BJ (cell line): ENCODE measurements at regions of chr5 and their contacts with region 1.

Region 1: DNA sequence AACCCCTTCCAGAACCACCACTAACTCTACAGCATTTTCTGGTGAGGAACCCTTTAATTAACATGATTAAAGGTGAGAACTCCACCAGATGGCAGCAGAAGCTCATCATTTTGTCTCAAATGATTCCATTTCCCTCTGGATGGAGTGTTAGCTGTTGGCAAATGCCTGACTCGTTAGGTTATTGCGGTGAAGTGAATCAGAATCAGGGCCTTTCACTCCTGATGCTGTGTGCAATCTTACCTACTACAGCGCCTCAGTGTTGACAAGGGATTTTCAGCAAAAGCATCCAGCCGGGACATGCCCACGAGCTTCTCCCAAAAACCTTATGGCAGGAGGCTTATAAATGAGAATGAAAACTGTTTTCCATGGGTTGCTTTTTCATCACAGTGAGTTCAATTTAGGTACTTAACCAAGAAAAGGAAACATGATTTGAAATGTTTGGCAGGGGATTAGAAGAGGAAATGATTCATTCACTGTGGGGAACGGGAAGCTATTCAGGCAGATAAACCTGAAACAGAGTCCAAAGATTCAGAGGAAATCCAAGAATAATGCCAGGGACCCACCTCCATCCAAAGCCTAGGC is 48.0 kb upstream of the CAST start:
- DNase-seq: peak; percentile 59
- H3K4me3 ChIP-seq: no peak overlapping the region
- H3K27me3 ChIP-seq: no peaks in the 10 kb centered on the region
- CTCF ChIP-seq: peak; percentile 43; the same call in 1 of the 2 replicates

Region 2: GRCh38 chr5:96601811-96602244 is 12.4 kb before region 1 on chr5:
- CTCF ChIA-PET with region 1: interaction called, 15 read pairs
- POLR2A ChIA-PET with region 1: no interaction called
- DNase-seq: no peak
- H3K4me3 ChIP-seq: no peak overlapping the region
- H3K27me3 ChIP-seq: no peaks in the 10 kb centered on the region; the same call in 1 of the 2 replicates
- CTCF ChIP-seq: peak; percentile 76

Region 3: DNA sequence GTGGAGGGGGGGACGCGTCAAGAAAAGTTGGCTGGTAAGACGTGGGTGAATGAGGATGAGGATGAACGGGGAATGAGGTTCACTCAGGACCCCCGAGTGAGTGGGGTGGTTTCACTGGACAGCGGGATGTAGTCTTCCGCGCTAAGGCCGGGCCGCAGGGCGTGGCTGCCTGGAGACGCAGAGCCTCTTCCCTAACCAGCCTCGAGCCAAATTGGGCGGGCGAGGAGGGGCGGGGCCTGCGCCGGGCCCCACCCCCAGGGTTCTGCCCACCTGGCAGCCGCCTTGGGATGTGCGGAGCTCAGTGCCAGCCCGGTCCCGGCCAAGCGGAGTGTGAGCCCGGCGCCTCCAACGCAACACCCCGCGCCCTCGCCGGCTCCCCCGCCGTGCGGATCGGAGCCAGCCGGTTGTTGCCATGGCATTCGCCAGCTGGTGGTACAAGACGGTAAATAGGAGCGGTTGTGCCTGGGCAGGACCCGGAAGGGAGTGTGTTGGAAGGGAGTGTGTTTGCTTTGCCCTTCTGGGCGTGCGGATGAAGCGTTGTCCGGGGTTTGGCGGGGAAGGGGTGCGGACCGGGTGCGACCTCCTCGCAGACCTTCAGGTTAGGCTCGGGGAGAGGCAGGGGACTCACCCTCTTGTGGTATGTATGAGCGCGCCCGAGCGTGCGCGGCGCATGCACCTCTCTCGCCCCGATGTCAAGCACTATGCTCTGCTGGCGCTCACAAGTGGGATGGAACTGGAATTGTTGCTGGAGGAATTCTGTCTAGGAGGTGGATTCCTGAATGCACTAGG is 48.7 kb after region 1 on chr5:
- CTCF ChIA-PET with region 1: interaction called, 14 read pairs
- POLR2A ChIA-PET with region 1: no interaction called
- DNase-seq: no peak
- H3K4me3 ChIP-seq: peak overlapping the region; percentile 92
- H3K27me3 ChIP-seq: no peaks in the 10 kb centered on the region
- CTCF ChIP-seq: no peak; the same call in 1 of the 2 replicates

Region 4: DNA sequence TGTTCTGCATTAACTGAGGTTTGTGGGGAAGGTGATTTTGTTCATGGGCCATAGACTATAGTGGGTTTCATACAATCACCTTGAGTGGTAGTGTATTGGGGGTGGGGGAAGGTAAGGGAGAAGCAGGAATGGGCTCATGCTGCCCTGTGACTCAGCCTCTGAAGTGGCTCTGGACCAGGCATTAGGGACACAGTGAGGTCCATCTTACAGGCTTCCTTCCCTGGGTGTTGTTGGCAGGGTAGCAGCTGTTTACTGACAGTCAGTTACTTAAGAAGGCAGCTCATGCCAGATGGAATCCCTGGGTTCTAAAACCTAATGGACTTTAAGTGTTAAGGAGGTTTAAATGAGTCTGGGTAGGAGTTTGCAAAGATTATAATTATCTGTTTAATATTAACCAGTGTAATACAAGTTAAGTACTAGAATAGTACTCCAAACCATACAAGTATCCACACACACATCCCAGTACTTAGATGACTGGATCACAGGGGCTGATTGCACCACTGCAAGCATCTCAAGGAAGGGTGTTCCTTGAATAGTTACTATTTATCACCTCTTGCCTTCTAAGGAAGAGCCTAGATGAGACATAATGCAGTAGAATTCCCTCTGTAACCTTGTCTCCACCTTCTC is 107.3 kb after region 1 on chr5:
- CTCF ChIA-PET with region 1: interaction called, 10 read pairs
- POLR2A ChIA-PET with region 1: no interaction called
- DNase-seq: no peak
- H3K4me3 ChIP-seq: no peak overlapping the region
- H3K27me3 ChIP-seq: no peaks in the 10 kb centered on the region
- CTCF ChIP-seq: no peak

Region 5: GRCh38 chr5:96729156-96729555 is 115.0 kb after region 1 on chr5:
- CTCF ChIA-PET with region 1: interaction called, 12 read pairs
- POLR2A ChIA-PET with region 1: no interaction called
- DNase-seq: no peak
- H3K4me3 ChIP-seq: no peak overlapping the region
- H3K27me3 ChIP-seq: no peaks in the 10 kb centered on the region
- CTCF ChIP-seq: peak; percentile 28; the same call in 1 of the 2 replicates